Calu3 (cell line): ENCODE measurements at regions of chr3 and their contacts with region 1.

Region 1: GRCh38 chr3:53938645-53939044 is 47.0 kb upstream of the SELENOK start:
- DNase-seq: peak; percentile 58
- H3K4me3 Mint-ChIP-seq: no peak overlapping the region
- H3K27ac Mint-ChIP-seq: no peak overlapping the region
- H3K4me1 Mint-ChIP-seq: no peaks in the 10 kb centered on the region
- H3K27me3 Mint-ChIP-seq: peaks cover 72% of the 10 kb centered on the region
- CTCF ChIP-seq: peak; percentile 41

Region 2: DNA sequence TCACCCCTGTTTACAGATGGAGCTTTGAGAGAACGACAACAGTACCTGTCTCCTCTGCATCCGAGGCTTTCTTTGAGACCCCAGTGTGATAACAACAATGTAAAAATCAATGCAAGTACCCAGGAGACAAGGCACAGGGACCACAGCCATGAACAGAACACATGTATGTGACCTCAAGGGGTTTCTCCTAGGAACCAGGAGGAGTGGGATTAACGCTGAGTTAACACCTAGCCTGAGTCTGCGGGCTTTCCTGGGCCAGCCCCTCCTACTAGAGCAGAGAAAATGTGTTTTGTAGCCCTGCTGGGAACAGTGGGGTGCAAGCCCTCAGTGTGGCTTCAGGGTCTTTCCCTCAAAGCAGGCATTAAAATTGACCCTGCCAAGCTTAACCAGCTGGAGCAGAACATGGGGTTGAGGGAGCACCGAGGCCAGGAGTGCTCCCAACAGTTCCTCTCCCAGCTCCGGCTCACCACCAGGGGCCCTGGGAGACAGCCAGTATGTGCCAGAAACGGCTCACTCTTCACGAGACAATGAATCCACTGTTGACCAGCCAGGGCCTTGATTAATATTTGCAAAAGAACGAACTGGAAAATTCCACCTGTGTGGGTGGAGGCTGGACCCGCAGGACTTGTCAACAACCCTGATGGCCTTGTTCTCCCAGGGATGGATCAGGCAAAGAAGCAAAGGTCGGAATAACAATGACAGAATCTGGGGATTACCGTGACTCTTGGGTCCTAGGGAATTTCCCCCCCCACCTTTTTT is 96.0 kb before region 1 on chr3:
- CTCF ChIA-PET with region 1: no interaction called
- intact Hi-C with region 1: no loop called
- DNase-seq: peak; percentile 88
- H3K4me3 Mint-ChIP-seq: peak overlapping the region; percentile 59
- H3K27ac Mint-ChIP-seq: peak overlapping the region; percentile 83
- H3K4me1 Mint-ChIP-seq: peaks cover 56% of the 10 kb centered on the region
- H3K27me3 Mint-ChIP-seq: no peaks in the 10 kb centered on the region
- CTCF ChIP-seq: peak; percentile 36

Region 3: DNA sequence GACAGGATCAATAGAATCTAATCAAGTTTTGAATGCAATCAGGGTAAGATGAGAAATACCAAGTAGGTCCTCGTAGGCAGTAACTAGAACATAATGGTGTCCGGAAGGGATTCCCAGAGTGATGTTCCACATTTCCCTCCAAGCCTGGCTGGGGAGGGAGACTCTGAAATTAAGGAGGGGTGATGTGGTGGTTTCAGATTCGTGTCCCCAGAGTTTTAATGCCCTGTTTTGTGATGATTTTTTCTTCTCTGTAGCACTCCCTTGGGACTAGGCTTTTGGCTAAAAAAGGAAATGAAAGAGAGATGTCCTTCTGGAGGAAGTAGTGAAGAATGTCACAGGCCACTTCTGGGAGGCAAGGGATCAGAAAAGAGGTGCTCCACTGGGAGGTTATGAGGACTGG is 75.4 kb after region 1 on chr3:
- CTCF ChIA-PET with region 1: no interaction called
- intact Hi-C with region 1: no loop called
- DNase-seq: no peak
- H3K4me3 Mint-ChIP-seq: no peak overlapping the region
- H3K27ac Mint-ChIP-seq: no peak overlapping the region
- H3K4me1 Mint-ChIP-seq: no peaks in the 10 kb centered on the region
- H3K27me3 Mint-ChIP-seq: peaks cover 30% of the 10 kb centered on the region
- CTCF ChIP-seq: no peak

Region 4: DNA sequence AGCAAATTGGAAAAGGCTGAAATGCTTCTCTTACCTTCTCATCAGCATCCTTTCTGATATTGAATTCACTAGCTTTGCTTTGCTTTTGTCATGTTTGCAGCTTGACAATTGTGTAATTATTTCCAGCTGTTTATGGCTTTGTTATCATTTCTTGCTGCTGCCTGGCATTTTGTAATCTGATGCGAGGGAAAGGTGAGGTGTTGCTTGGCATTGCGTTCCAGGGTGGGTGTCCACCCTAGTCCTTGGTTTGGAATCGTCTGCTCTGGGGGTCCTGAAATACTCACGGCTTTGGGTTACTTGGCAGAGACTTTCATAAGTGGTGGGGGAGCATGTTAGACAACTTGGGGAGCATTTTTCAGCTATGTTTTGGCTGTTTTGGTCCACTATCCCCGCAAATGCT is 186.7 kb after region 1 on chr3:
- CTCF ChIA-PET with region 1: no interaction called
- intact Hi-C with region 1: loop called (anchors 5 kb)
- DNase-seq: no peak
- H3K4me3 Mint-ChIP-seq: no peak overlapping the region
- H3K27ac Mint-ChIP-seq: no peak overlapping the region
- H3K4me1 Mint-ChIP-seq: no peaks in the 10 kb centered on the region
- H3K27me3 Mint-ChIP-seq: peaks cover 47% of the 10 kb centered on the region
- CTCF ChIP-seq: no peak

Region 5: GRCh38 chr3:54139630-54140029 is 201.0 kb after region 1 on chr3:
- CTCF ChIA-PET with region 1: no interaction called
- intact Hi-C with region 1: loop called (anchors 5 kb)
- DNase-seq: no peak
- H3K4me3 Mint-ChIP-seq: no peak overlapping the region
- H3K27ac Mint-ChIP-seq: no peak overlapping the region
- H3K4me1 Mint-ChIP-seq: no peaks in the 10 kb centered on the region
- H3K27me3 Mint-ChIP-seq: peaks cover 95% of the 10 kb centered on the region
- CTCF ChIP-seq: no peak

Region 6: GRCh38 chr3:54198556-54198955 is 259.9 kb after region 1 on chr3:
- CTCF ChIA-PET with region 1: no interaction called
- intact Hi-C with region 1: no loop called
- DNase-seq: no peak
- H3K4me3 Mint-ChIP-seq: no peak overlapping the region
- H3K27ac Mint-ChIP-seq: no peak overlapping the region
- H3K4me1 Mint-ChIP-seq: no peaks in the 10 kb centered on the region
- H3K27me3 Mint-ChIP-seq: peaks cover 72% of the 10 kb centered on the region
- CTCF ChIP-seq: no peak

Region 7: GRCh38 chr3:54374214-54374855 is 435.7 kb after region 1 on chr3:
- CTCF ChIA-PET with region 1: interaction called, 14 read pairs
- intact Hi-C with region 1: loop called (anchors 1 kb)
- DNase-seq: peak; percentile 52
- H3K4me3 Mint-ChIP-seq: no peak overlapping the region
- H3K27ac Mint-ChIP-seq: no peak overlapping the region
- H3K4me1 Mint-ChIP-seq: no peaks in the 10 kb centered on the region
- H3K27me3 Mint-ChIP-seq: peaks cover 51% of the 10 kb centered on the region
- CTCF ChIP-seq: no peak

Region 8: DNA sequence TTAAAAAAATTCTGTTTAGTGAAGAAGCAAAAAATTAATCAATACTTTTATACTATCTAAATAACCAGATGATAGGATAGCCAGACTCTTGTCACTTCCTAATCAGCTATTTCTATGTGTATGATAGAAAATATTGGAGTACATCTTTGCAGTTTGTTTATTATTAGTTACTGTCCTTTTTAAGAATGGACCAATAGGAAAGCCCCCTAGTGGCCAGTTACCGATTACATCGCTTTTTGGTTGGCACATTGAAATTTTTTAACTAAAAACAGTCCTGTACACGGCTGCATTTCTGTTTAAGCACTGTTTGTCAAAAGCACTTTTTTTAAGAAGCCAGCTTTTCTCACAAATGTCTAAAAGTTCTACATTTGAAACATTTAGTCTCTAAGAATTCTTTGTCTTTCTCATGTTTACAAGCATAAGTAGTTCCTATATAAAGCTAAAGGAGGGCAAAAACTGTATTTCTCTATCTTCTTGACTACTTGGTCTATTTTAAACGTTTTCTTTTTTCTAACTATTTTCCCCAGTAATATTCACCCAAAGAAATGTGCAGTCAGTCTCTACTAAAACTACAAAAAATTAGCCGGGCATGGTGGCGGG is 1242.4 kb after region 1 on chr3:
- CTCF ChIA-PET with region 1: no interaction called
- intact Hi-C with region 1: loop called (anchors 5 kb)
- DNase-seq: peak; percentile 34
- H3K4me3 Mint-ChIP-seq: no peak overlapping the region
- H3K27ac Mint-ChIP-seq: no peak overlapping the region
- H3K4me1 Mint-ChIP-seq: no peaks in the 10 kb centered on the region
- H3K27me3 Mint-ChIP-seq: no peaks in the 10 kb centered on the region
- CTCF ChIP-seq: no peak